CD4-positive, alpha-beta memory T cell (primary cell): ENCODE measurements at regions of chr1 and their contacts with region 1.

Region 1: DNA sequence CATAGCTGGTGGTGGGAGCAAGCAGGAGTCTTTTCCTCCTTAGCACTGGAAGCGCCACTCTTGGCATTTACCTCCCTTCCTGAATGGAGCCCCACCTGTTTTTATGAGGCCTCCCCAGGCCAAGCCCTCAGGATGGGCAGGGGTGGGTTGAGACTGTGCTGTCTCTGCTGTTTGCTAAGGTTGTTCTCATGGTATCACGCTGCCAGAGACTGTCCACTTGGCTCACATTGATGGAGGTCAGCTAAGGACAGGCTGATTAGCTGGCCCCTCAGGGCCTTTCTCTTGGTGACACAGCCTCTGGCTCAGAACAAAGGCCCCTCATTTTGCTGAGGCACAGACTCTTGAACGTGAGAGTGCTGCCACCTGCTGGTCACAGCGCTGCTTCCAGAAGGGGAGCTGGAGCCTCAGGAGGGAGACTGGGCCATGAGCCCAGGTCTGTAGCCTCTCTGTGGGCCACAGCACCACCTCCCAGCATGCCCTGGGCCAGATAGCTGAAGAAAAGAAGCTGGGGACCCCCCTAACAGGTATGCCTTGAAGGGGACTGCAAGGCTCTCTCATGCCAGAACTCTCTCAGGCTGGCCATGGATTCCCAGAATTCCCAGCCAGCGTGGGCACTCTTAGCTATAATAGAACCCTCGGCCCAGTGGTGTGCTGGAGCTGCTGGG is 85.6 kb downstream of the CD58 start:
- DNase-seq: peak; percentile 74 to 81 (median 76)
- H3K4me3 ChIP-seq: no peak overlapping the region
- H3K4me3 Mint-ChIP-seq: no peak overlapping the region
- H3K27ac ChIP-seq: no peak overlapping the region
- H3K27ac Mint-ChIP-seq: no peak overlapping the region
- H3K4me1 ChIP-seq: no peaks in the 10 kb centered on the region
- H3K4me1 Mint-ChIP-seq: peaks cover 0 to 2% (median 0%) of the 10 kb centered on the region in 4 donors
- H3K27me3 ChIP-seq: no peaks in the 10 kb centered on the region
- H3K27me3 Mint-ChIP-seq: no peaks in the 10 kb centered on the region

Region 2: GRCh38 chr1:116151739-116152576 is 333.2 kb before region 1 on chr1:
- CTCF ChIA-PET with region 1: interaction called, 463 read pairs
- POLR2A ChIA-PET with region 1: interaction called, 5 read pairs
- intact Hi-C with region 1: loop called (anchors 1 kb)
- DNase-seq: peak; percentile 72 to 81 (median 76)
- H3K4me3 ChIP-seq: peak overlapping the region; percentile 23 to 28
- H3K4me3 Mint-ChIP-seq: peak overlapping the region; percentile 46 to 87 (median 80)
- H3K27ac ChIP-seq: peak overlapping the region; percentile 17
- H3K27ac Mint-ChIP-seq: peak overlapping the region; percentile 81 to 93 (median 88)
- H3K4me1 ChIP-seq: peaks cover 17% of the 10 kb centered on the region
- H3K4me1 Mint-ChIP-seq: peaks cover 10 to 23% (median 15%) of the 10 kb centered on the region in 4 donors
- H3K27me3 ChIP-seq: no peaks in the 10 kb centered on the region
- H3K27me3 Mint-ChIP-seq: peaks cover 0 to 3% of the 10 kb centered on the region in 2 donors

Region 3: DNA sequence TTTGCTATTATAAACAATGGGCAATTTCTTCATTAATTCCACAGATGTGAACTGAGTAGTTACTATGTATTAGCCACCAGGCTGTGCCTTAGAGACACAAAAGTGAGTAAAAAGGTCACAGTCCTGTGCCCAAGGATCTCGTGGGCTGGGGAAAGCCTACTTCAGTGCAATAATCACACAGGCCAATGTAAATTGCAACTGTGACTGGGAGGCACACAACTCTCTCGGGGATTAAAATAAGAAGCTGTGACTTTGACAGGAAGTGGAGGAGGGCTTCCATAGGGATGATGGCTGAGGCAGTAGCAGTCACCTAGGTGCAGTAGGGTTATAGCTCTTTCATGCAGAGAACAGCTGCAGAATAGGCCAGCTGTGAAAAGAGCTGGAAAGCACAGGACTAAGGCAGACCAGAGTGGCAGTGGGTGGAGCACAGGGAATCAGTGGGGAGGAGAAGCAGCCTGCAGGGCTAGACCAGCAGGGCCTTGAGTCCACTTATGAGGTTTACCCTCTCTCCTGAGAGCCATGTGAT is 252.2 kb before region 1 on chr1:
- CTCF ChIA-PET with region 1: interaction called, 153 read pairs
- POLR2A ChIA-PET with region 1: interaction called, 7 read pairs
- intact Hi-C with region 1: loop called (anchors 1 kb)
- DNase-seq: peak; percentile 34 to 51 (median 44)
- H3K4me3 ChIP-seq: no peak overlapping the region
- H3K4me3 Mint-ChIP-seq: no peak overlapping the region
- H3K27ac ChIP-seq: no peak overlapping the region
- H3K27ac Mint-ChIP-seq: peak overlapping the region in 4 of 7 donors; percentile 47 to 83 (median 68)
- H3K4me1 ChIP-seq: peaks cover 10% of the 10 kb centered on the region
- H3K4me1 Mint-ChIP-seq: peaks cover 15 to 23% (median 20%) of the 10 kb centered on the region in 4 donors
- H3K27me3 ChIP-seq: no peaks in the 10 kb centered on the region
- H3K27me3 Mint-ChIP-seq: no peaks in the 10 kb centered on the region

Region 4: GRCh38 chr1:116288201-116288761 is 196.9 kb before region 1 on chr1:
- CTCF ChIA-PET with region 1: no interaction called
- POLR2A ChIA-PET with region 1: no interaction called
- intact Hi-C with region 1: no loop called
- DNase-seq: no peak
- H3K4me3 ChIP-seq: no peak overlapping the region
- H3K4me3 Mint-ChIP-seq: no peak overlapping the region
- H3K27ac ChIP-seq: no peak overlapping the region
- H3K27ac Mint-ChIP-seq: no peak overlapping the region
- H3K4me1 ChIP-seq: no peaks in the 10 kb centered on the region
- H3K4me1 Mint-ChIP-seq: peaks cover 0 to 2% (median under 1%) of the 10 kb centered on the region in 4 donors
- H3K27me3 ChIP-seq: no peaks in the 10 kb centered on the region
- H3K27me3 Mint-ChIP-seq: peaks cover 0 to 2% of the 10 kb centered on the region in 2 donors

Region 5: GRCh38 chr1:116390195-116390594 is 95.0 kb before region 1 on chr1:
- CTCF ChIA-PET with region 1: interaction called, 18 read pairs
- POLR2A ChIA-PET with region 1: no interaction called
- intact Hi-C with region 1: no loop called
- DNase-seq: peak; percentile 49 to 85 (median 66)
- H3K4me3 ChIP-seq: no peak overlapping the region
- H3K4me3 Mint-ChIP-seq: peak overlapping the region in 4 of 8 donors; percentile 10 to 64 (median 36)
- H3K27ac ChIP-seq: peak overlapping the region; percentile 41
- H3K27ac Mint-ChIP-seq: peak overlapping the region; percentile 55 to 94 (median 86)
- H3K4me1 ChIP-seq: peaks cover 39% of the 10 kb centered on the region
- H3K4me1 Mint-ChIP-seq: peaks cover 42 to 63% (median 46%) of the 10 kb centered on the region in 4 donors
- H3K27me3 ChIP-seq: no peaks in the 10 kb centered on the region
- H3K27me3 Mint-ChIP-seq: no peaks in the 10 kb centered on the region

Region 6: DNA sequence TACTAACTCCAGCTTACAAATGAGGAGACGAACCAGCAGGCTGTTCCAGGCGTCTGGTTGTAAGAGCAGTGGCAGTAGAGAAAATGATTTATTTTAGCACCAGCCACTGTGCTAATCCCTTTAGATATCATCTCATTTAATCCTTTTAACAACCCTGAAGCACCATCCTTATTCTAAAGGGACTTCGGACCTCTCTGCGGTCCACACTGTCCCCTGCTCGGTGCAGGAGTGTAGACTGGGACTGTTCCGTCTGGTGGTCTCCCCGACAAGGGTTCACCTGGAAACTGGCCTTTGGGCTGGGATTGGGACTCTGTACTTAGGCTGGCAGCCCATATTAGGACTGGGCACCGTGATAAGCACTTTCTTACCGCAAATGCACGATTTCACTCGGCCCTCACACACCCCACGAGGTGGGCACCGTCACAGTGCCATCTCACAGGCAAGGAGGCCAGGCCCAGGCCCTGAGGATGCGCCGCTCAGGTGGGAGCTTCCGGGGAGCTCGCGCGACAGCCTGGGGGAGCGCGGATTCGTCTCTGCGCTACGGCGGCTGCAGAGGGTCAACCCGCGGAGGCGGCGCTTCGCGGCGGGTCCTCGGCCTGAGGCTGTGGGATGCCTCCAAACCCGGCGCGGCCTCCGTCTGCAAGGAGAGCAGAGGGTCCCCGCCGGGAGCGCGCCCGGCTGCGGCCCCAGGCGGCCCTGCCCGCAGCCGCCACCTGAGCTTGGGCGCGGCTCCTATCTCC is 66.9 kb before region 1 on chr1:
- CTCF ChIA-PET with region 1: interaction called, 21 read pairs
- POLR2A ChIA-PET with region 1: interaction called, 3 read pairs
- intact Hi-C with region 1: no loop called
- DNase-seq: peak; percentile 86 to 90 (median 87)
- H3K4me3 ChIP-seq: peak overlapping the region; percentile 90 to 96
- H3K4me3 Mint-ChIP-seq: peak overlapping the region; percentile 84 to 96 (median 91)
- H3K27ac ChIP-seq: peak overlapping the region; percentile 80
- H3K27ac Mint-ChIP-seq: peak overlapping the region; percentile 95 to 98 (median 96)
- H3K4me1 ChIP-seq: peaks cover 32% of the 10 kb centered on the region
- H3K4me1 Mint-ChIP-seq: peaks cover 14 to 52% (median 27%) of the 10 kb centered on the region in 4 donors
- H3K27me3 ChIP-seq: no peaks in the 10 kb centered on the region
- H3K27me3 Mint-ChIP-seq: no peaks in the 10 kb centered on the region

Region 7: GRCh38 chr1:116498789-116499628 is 13.8 kb after region 1 on chr1:
- CTCF ChIA-PET with region 1: interaction called, 193 read pairs
- POLR2A ChIA-PET with region 1: interaction called, 5 read pairs
- intact Hi-C with region 1: no loop called
- DNase-seq: peak; percentile 38 to 59 (median 54)
- H3K4me3 ChIP-seq: no peak overlapping the region
- H3K4me3 Mint-ChIP-seq: peak overlapping the region in 1 of 8 donors; percentile 27
- H3K27ac ChIP-seq: no peak overlapping the region
- H3K27ac Mint-ChIP-seq: peak overlapping the region in 6 of 7 donors; percentile 42 to 90 (median 74)
- H3K4me1 ChIP-seq: peaks cover 31% of the 10 kb centered on the region
- H3K4me1 Mint-ChIP-seq: peaks cover 26 to 60% (median 35%) of the 10 kb centered on the region in 4 donors
- H3K27me3 ChIP-seq: no peaks in the 10 kb centered on the region
- H3K27me3 Mint-ChIP-seq: no peaks in the 10 kb centered on the region

Region 8: DNA sequence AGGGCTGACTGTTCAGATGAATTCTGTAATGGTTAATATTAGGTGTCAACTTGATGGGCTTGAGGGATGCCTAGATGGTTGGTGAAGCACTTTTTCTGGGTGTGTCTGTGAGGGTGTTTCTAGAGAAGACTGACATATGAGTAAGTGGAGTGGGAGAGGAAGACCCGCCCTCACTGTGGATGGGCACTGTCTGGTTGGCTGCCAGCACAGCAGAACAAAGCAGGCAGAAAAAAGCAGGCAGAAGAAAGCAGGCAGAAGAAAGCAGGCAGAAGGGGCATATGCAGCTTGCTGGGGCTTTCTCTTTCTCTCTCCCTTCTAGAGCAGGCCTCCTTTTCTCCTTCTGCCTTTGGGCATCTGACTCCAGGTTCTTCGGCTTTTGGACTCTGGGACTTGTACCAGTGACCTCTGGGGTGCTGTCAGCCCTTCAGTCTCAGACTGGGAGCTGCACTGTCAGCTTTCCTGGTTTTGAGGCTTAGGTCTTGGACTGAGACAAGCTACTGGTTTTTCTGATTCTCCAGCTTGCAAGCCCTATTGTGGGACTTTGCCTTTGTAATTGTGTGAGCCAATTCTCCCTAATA is 226.1 kb after region 1 on chr1:
- CTCF ChIA-PET with region 1: no interaction called
- POLR2A ChIA-PET with region 1: no interaction called
- intact Hi-C with region 1: no loop called
- DNase-seq: no peak
- H3K4me3 ChIP-seq: no peak overlapping the region
- H3K4me3 Mint-ChIP-seq: no peak overlapping the region
- H3K27ac ChIP-seq: no peak overlapping the region
- H3K27ac Mint-ChIP-seq: no peak overlapping the region
- H3K4me1 ChIP-seq: no peaks in the 10 kb centered on the region
- H3K4me1 Mint-ChIP-seq: peaks cover 0 to 2% (median 0%) of the 10 kb centered on the region in 4 donors
- H3K27me3 ChIP-seq: peaks cover 4% of the 10 kb centered on the region
- H3K27me3 Mint-ChIP-seq: peaks cover 8 to 19% of the 10 kb centered on the region in 2 donors